Posterior vena cava (tissue), 2 donors: ENCODE measurements at regions of chr1 and their contacts with region 1.

Region 1: DNA sequence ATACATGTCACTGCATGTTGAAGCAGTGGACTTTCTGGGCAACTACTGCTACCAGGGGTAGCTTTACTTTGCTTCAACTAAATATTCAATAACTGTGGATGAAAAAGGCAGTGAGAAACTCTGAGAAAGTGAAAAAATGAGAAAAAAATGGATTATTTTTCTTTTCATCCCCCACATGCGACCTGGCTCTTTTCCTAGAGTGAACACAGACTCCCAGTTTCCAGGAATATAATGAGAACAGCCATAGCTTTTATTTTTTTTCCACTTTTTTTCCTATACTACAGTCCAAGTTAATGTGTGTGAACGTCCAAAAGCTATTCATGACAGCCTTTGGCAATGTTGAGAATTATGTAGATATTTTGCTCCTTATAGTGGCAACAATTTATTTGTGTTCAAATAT is 230.4 kb downstream of the DNM3 start:
- DNase-seq: no peak

Region 2: DNA sequence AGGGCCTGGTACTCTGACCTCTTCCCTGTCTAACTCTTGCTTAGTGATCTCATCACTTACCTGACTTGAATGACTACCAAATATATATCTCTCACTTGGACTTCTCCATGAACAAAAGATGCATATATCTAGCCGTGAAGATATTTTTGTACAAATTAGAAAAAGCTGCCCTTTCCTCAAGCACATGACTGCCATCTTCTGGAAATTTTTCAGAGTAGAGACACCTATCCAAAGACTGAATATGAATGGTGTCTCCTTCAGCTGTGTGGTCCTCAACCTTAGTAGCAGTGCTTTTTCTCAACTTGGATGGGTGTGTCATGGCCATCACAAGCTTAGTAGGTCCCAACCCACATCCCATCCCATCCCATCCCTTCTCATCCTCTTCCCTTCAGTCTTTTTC is 88.2 kb before region 1 on chr1:
- intact Hi-C with region 1: no loop called
- DNase-seq: no peak

Region 3: DNA sequence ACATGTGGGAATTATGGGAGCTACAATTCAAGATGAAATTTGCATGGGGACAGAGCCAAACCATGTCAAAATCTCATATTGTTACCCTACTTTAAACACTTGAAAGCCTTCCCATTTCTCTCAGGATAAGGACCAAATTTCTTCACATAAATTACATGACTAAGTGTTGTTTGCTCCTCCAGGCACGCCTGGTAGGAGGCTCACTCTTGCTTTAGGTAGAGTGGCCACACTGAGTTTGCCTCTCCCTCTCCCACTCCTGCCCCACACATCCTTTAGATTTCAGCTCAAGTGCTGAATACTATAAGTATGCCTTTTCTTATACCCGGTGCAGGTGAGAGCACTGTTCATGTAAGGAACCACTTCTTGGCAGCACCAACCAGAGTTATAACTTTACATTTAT is 48.6 kb after region 1 on chr1:
- intact Hi-C with region 1: loop called in 1 of 2 experiments (anchors 2 kb)
- DNase-seq: no peak

Region 4: DNA sequence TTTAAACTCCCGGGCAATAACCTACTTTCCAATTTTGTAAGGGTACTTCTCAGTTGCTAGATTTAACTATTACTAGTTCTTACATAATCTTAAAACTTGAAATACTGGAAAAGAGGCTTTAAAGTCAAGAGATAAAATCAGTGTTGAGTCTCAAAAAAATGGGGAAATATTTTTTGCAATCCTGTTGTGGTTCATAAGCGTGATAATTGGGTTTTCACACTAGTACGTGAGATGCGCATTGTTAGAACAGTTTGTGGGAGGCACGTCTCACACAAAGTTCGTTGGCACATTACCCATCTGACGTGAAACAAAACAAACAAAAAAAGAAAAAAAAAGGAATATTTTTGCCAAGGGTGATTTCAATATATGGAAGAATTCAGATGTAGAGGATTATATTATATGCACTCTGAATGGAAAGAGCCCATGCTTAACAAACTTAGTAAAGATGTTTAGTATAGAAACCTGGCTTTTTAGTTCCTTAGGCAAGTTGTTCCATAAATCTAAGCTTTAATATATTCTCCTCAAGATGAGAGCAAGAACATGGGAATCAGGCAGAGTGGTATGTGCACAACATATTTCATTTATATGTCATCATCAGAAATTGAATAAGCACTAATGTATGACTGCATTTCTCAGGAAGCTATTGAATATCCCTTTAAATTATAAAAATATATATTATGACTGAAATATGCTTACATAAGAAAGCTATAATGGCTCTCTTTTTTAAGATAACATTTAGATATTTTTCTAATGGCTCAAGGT is 1209.3 kb after region 1 on chr1:
- intact Hi-C with region 1: no loop called
- DNase-seq: no peak